ENCODE measurements at regions of chr2 and their contacts with region 1.

Region 1: GRCh38 chr2:84846041-84846663 is 34.7 kb downstream of the TRABD2A start:
- DNase-seq: peak; percentile 57
- ATAC-seq: peak; percentile 51
- H3K4me3 Mint-ChIP-seq: peak overlapping the region; percentile 48
- H3K27ac Mint-ChIP-seq: peak overlapping the region; percentile 97
- H3K4me1 Mint-ChIP-seq: peaks cover 89% of the 10 kb centered on the region
- H3K27me3 Mint-ChIP-seq: no peaks in the 10 kb centered on the region
- CTCF ChIP-seq: no peak

Region 2: GRCh38 chr2:84654414-84654813 is 191.7 kb before region 1 on chr2:
- CTCF ChIA-PET with region 1: no interaction called
- POLR2A ChIA-PET with region 1: no interaction called
- intact Hi-C with region 1: no loop called
- DNase-seq: no peak
- ATAC-seq: no peak
- H3K4me3 Mint-ChIP-seq: no peak overlapping the region
- H3K27ac Mint-ChIP-seq: no peak overlapping the region
- H3K4me1 Mint-ChIP-seq: peaks cover 57% of the 10 kb centered on the region
- H3K27me3 Mint-ChIP-seq: no peaks in the 10 kb centered on the region
- CTCF ChIP-seq: no peak

Region 3: DNA sequence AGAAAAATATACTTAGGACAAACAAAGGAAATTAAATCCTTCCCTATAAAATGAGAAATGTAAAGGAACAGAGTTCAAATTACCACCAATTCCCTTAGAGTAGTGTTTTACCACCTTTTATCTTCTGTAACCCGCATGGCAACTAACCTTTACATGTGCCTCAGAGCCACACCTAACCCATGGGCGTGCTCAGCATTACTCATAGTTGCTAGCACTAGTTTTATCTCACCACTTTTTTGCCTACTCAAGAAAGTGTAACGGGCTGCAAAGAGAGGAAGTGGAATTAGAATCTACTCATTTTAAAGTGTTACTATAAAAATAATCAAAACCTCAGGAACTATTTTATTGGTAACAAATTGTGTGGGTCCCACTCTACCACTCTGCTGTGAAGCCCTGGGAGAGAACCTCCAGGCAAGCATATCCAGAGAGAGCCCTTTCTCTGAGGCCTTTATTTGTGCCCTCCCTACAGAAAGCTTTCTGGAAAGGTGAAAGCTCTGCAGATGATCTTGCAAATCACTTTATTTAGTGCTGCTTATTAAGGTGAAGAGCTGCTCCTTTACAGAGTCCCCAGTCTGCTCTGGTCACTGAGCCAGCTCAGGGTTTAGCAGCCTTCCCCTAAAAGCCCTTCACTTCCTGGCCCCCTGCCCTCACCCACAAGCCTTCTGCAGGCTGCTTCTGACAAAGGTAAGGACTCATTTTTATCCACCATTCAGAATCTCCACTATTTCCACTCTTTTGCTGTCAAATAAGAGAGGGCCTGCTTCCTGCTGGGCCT is 64.0 kb before region 1 on chr2:
- CTCF ChIA-PET with region 1: no interaction called
- POLR2A ChIA-PET with region 1: no interaction called
- intact Hi-C with region 1: loop called (anchors 10 kb)
- DNase-seq: peak; percentile 85
- ATAC-seq: peak; percentile 90
- H3K4me3 Mint-ChIP-seq: peak overlapping the region; percentile 36
- H3K27ac Mint-ChIP-seq: peak overlapping the region; percentile 90
- H3K4me1 Mint-ChIP-seq: peaks cover 68% of the 10 kb centered on the region
- H3K27me3 Mint-ChIP-seq: no peaks in the 10 kb centered on the region
- CTCF ChIP-seq: no peak

Region 4: DNA sequence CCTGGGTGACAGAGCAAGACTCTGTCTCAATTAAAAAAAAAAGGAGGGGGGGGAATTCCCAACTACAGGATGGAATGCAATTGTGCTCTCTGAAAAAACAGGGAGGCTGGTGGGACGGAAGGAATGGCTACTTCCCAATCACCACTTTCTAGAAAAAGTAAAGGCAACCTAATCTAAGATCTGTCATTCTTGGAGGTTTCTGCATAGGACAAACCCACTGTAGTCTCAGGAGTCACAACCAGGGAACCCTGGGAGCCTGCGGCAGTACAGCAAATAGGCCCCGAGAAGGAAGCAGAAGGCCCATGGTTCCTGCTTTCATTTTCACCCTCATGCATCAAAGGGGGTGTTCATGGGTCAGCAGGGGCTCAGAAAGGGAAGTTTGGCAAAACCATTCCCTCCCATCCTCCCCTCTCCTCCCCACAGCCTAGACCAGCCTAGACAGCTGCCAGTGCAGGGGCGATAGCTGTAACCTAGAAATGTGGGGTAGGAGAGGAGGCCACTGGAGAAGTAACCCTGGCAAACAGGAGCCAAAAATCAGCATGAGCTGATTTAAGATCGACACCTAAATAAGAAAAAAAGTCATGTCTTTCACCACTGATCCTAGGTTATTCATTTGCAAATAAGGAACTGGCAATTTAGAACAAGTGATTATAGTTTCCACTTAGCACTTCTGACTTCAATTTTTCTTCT is 13.2 kb before region 1 on chr2:
- CTCF ChIA-PET with region 1: interaction called, 14 read pairs
- POLR2A ChIA-PET with region 1: interaction called, 10 read pairs
- intact Hi-C with region 1: loop called (anchors 1 kb)
- DNase-seq: peak; percentile 44
- ATAC-seq: peak; percentile 60
- H3K4me3 Mint-ChIP-seq: peak overlapping the region; percentile 54
- H3K27ac Mint-ChIP-seq: peak overlapping the region; percentile 87
- H3K4me1 Mint-ChIP-seq: peaks cover 39% of the 10 kb centered on the region
- H3K27me3 Mint-ChIP-seq: no peaks in the 10 kb centered on the region
- CTCF ChIP-seq: no peak

Region 5: GRCh38 chr2:84856787-84857186 is 10.6 kb after region 1 on chr2:
- CTCF ChIA-PET with region 1: interaction called, 8 read pairs
- POLR2A ChIA-PET with region 1: interaction called, 18 read pairs
- intact Hi-C with region 1: no loop called
- DNase-seq: peak; percentile 76
- ATAC-seq: peak; percentile 82
- H3K4me3 Mint-ChIP-seq: peak overlapping the region; percentile 49
- H3K27ac Mint-ChIP-seq: peak overlapping the region; percentile 93
- H3K4me1 Mint-ChIP-seq: peaks cover 93% of the 10 kb centered on the region
- H3K27me3 Mint-ChIP-seq: no peaks in the 10 kb centered on the region
- CTCF ChIP-seq: no peak

Region 6: DNA sequence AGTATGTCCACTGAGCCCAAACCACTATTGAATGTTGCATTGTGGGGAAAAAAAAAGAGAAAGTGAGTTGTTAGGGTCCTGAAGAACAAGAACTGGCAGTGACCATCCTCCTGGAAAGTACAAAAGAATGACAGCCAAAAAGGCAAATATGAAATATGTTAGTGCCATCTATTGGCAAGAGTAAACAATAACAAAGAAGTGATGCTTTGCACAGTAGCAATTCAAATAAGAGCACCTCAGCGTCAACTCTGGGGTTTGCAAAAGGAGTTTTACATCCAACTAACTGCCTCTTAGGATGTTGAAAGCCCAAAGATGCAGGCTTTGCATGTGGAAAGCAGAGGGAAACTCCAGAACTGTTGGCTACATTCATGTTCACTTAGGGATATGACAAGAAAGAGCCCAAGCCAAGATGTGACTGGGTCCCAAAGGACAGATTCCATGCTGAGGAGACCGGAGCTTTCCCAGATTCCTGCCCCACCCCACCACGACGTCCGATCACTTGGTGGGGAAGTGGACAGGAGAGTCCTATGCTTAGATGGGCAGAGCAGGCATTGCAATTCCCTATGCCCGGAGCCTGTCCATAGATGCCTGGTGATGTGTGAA is 19.1 kb after region 1 on chr2:
- CTCF ChIA-PET with region 1: interaction called, 8 read pairs
- POLR2A ChIA-PET with region 1: interaction called, 12 read pairs
- intact Hi-C with region 1: no loop called
- DNase-seq: no peak
- ATAC-seq: peak; percentile 50
- H3K4me3 Mint-ChIP-seq: no peak overlapping the region
- H3K27ac Mint-ChIP-seq: peak overlapping the region; percentile 84
- H3K4me1 Mint-ChIP-seq: peaks cover 80% of the 10 kb centered on the region
- H3K27me3 Mint-ChIP-seq: no peaks in the 10 kb centered on the region
- CTCF ChIP-seq: peak; percentile 56